ENCODE measurements at regions of chr10 and their contacts with region 1.

Region 1: GRCh38 chr10:67697724-67698131 is 1.7 kb upstream of the CTNNA3 start:
- DNase-seq: peak; percentile 25
- H3K4me3 ChIP-seq: no peak overlapping the region
- H3K27ac ChIP-seq: no peak overlapping the region
- H3K4me1 ChIP-seq: no peaks in the 10 kb centered on the region
- H3K27me3 ChIP-seq: no peaks in the 10 kb centered on the region
- CTCF ChIP-seq: peak in 3 of 4 experiments; percentile 54 to 59 (median 56)
- POLR2A ChIP-seq: no peak

Region 2: GRCh38 chr10:67779465-67780203 is 81.9 kb after region 1 on chr10:
- intact Hi-C with region 1: loop called (anchors 2 kb)
- DNase-seq: peak; percentile 67
- H3K4me3 ChIP-seq: no peak overlapping the region
- H3K27ac ChIP-seq: no peak overlapping the region
- H3K4me1 ChIP-seq: no peaks in the 10 kb centered on the region
- H3K27me3 ChIP-seq: no peaks in the 10 kb centered on the region
- CTCF ChIP-seq: peak; percentile 69 to 91 (median 78)
- POLR2A ChIP-seq: no peak

Region 3: GRCh38 chr10:67837541-67838314 is 140.0 kb after region 1 on chr10 and contains the start of gene DNAJC12:
- intact Hi-C with region 1: no loop called
- DNase-seq: peak; percentile 14
- H3K4me3 ChIP-seq: peak within 1 kb of the TSS in 1 of 2 donors; percentile 10
- H3K27ac ChIP-seq: no peak within 1 kb of the TSS
- H3K4me1 ChIP-seq: no peaks in the 10 kb centered on the region
- H3K27me3 ChIP-seq: no peaks in the 10 kb centered on the region
- CTCF ChIP-seq: no peak
- POLR2A ChIP-seq: no peak
- total RNA-seq, gene DNAJC12: 6.4 to 22.7 TPM